ENCODE measurements at regions of chr6 and their contacts with region 1.

Region 1: GRCh38 chr6:163180874-163181541 is 233.5 kb upstream of the QKI start:
- DNase-seq: peak; percentile 91

Region 2: GRCh38 chr6:163392533-163392932 is 211.5 kb after region 1 on chr6:
- intact Hi-C with region 1: loop called in 1 of 2 experiments (anchors 10 kb)
- DNase-seq: no peak

Measured in posterior vena cava (tissue), 2 donors.